ENCODE measurements at regions of chr11 and their contacts with region 1.

Region 1: DNA sequence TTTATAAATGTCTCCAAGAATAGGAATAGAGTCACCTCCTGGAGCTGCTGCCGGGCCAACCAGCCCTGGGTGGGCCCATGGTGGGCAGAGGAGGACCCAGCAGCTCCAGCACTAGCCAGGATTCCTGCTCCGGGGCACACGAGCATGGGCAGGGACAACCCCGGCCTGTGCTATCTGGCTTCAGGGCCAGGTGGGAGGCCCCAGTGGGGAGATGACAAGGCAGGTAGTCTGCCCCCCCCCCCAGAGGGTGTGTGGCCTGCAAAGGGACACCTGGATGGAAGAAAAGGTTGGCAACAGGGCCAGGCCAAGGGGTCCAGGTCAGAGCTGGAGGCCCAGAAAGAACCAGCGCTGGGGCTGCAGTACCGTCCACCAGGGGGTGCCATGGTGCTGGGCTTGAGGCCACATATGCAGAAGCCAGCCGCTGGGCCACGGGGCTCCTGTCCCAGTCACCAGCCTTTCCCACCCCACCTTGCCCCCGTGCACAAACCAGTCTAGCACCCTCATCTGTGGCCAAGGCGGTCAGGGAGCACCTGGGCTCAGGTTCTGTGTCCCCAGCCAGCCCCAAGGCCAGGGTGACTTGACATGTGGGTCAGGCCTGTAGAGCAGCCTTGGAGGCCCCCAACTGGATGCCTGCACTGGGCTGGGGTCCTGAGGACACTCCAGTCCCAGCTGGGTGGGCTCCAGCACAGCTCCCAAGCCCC is 3.5 kb downstream of the TSPAN32 start:
- DNase-seq: peak; percentile 97
- H3K4me3 ChIP-seq: peak overlapping the region in 3 of 8 donors; percentile 9 to 73 (median 13)
- H3K27ac ChIP-seq: peak overlapping the region in 7 of 8 donors; percentile 78 to 95 (median 87)
- H3K4me1 ChIP-seq: peaks cover 47 to 78% (median 72%) of the 10 kb centered on the region in 6 donors
- H3K27me3 ChIP-seq: no peaks in the 10 kb centered on the region
- CTCF ChIP-seq: peak; percentile 88 to 98 (median 96)
- POLR2A ChIP-seq: no peak

Region 2: GRCh38 chr11:2196970-2197770 is 108.1 kb before region 1 on chr11:
- intact Hi-C with region 1: loop called (anchors 5 kb)
- DNase-seq: peak; percentile 94
- H3K4me3 ChIP-seq: no peak overlapping the region
- H3K27ac ChIP-seq: no peak overlapping the region
- H3K4me1 ChIP-seq: peaks cover 0 to 16% (median 4%) of the 10 kb centered on the region in 6 donors
- H3K27me3 ChIP-seq: peaks cover 0 to 17% (median 7%) of the 10 kb centered on the region in 7 donors
- CTCF ChIP-seq: peak; percentile 81 to 96 (median 94)
- POLR2A ChIP-seq: no peak

Region 3: DNA sequence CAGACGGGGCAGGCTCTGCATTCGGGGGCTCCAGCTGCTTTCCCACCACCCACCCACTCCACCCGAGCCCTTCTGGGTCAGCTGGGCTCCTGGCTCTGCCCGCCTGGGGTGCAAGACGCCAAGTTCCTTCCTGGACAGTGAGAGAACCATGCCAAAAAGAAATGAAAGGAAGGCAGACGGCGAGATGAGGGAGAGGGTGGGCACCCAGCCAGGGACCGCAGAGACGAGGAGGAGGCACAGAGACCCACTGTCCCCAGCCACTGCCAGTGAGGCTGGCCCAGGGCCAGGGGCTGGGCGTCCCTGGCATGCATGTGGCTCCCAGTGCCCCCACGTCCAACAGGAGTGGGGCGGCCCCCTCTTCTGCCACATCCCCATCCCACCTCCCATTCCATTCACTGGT is 61.0 kb after region 1 on chr11:
- intact Hi-C with region 1: no loop called
- DNase-seq: no peak
- H3K4me3 ChIP-seq: no peak overlapping the region
- H3K27ac ChIP-seq: peak overlapping the region in 3 of 8 donors; percentile 18 to 42 (median 26)
- H3K4me1 ChIP-seq: peaks cover 0 to 14% (median 5%) of the 10 kb centered on the region in 6 donors
- H3K27me3 ChIP-seq: no peaks in the 10 kb centered on the region
- CTCF ChIP-seq: no peak
- POLR2A ChIP-seq: no peak

Region 4: GRCh38 chr11:2400069-2400760 is 94.9 kb after region 1 on chr11 and contains the start of gene TSSC4:
- intact Hi-C with region 1: loop called (anchors 5 kb)
- DNase-seq: peak; percentile 100
- H3K4me3 ChIP-seq: peak within 1 kb of the TSS; percentile 79 to 100 (median 92)
- H3K27ac ChIP-seq: peak within 1 kb of the TSS; percentile 90 to 99 (median 98)
- H3K4me1 ChIP-seq: peaks cover 10 to 68% (median 39%) of the 10 kb centered on the region in 6 donors
- H3K27me3 ChIP-seq: no peaks in the 10 kb centered on the region
- CTCF ChIP-seq: peak; percentile 89 to 100 (median 99)
- POLR2A ChIP-seq: peak; percentile 11 to 81 (median 52)
- total RNA-seq, gene TSSC4: 28.7 to 58.1 (median 42.2) TPM

Region 5: DNA sequence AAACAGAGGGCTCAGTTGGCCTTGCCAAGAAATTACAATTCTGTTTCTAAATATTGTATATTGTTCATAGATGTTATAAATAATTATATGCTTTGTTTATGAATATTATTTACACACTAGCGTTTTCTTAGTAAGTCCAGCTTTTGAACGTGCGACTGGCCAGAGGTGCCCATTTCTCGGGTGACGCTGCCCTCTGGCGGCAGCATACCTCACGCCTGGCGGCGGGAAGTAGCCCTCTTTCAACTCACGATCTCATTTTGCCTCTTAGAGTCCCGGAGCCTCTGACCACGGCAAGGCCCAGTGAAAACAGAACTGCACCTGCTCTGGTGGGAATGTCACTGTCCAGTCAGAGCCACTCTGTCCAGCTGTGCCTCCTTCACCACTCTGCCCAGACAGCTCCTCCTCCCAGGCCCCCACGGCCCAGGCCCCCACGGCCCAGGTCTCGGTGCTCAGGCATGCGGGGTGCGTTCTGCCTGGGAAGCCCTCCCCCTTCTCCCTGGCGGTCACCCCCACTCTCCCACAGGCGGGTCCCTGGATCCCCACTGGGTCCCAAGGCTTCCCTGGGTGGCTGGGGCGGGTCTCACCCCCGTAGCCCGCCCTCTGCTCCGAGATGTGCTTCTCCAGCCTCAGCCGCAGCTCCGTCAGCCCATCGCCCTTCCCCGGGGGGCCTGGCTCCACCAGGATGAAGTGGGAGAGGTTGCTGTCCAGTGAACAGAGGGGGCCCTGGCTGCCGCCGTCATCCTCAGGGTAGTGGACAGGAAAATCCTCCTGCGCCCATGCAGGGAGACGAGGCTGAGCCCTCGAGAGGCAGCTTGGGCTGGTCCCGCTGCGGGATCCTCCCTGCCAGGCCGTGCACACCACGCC is 114.6 kb after region 1 on chr11:
- intact Hi-C with region 1: loop called (anchors 2 kb)
- DNase-seq: peak; percentile 92
- H3K4me3 ChIP-seq: no peak overlapping the region
- H3K27ac ChIP-seq: no peak overlapping the region
- H3K4me1 ChIP-seq: peaks cover 6 to 21% (median 14%) of the 10 kb centered on the region in 6 donors
- H3K27me3 ChIP-seq: peaks cover 0 to 39% (median 5%) of the 10 kb centered on the region in 7 donors
- CTCF ChIP-seq: peak; percentile 73 to 94 (median 87)
- POLR2A ChIP-seq: no peak

Measured in spleen (tissue), 13 donors.